Posterior cingulate gyrus (tissue), 11 donors: ENCODE measurements at regions of chr19 and their contacts with region 1.

Region 1: GRCh38 chr19:43983912-43984686 is at the start of gene ZNF155:
- DNase-seq: peak; percentile 87 to 98 (median 93)

Region 2: GRCh38 chr19:43950834-43951645 is 33.1 kb before region 1 on chr19 and contains the start of gene ZNF221:
- intact Hi-C with region 1: loop called (anchors 1 kb)
- DNase-seq: peak; percentile 83 to 98 (median 88)

Region 3: GRCh38 chr19:44025217-44025936 is 41.3 kb after region 1 on chr19 and contains the start of gene ZNF222:
- intact Hi-C with region 1: loop called (anchors 1 kb)
- DNase-seq: peak; percentile 71 to 97 (median 84)

Region 4: DNA sequence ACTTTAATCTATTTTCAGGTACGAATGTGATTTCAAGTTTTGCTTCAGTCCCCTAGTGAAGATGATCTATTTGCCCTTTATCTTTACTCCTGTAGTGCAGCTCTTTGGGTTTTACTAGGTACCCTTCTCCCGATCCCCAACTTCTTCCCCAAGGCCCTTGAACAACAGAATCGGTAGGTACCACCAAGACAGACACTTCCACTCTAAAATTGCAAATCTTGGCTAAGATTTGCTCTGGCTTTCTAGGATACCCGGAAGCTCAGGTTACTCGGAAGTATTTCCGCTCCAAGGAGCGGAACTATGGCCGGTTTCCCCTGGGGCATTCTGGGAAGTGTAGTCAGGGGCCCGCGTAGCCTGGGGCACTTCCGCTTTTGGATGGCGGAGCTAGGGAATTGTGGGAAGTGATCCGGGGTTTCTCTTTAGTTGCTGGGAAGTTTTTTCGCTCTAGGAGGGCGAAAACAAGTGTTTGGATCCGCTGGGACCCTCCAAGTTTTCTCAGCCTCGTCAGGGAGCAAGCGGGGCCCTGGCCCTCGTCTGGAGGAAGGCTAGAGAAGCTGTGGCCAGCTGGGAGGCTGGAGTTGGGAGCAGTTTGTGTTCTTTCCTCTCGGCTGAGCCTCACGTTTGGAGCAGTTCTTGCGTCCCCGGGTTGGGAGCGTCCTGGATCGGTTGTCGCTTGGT is 223.2 kb after region 1 on chr19:
- intact Hi-C with region 1: no loop called
- DNase-seq: peak; percentile 78 to 98 (median 87)